ENCODE measurements at regions of chr5 and their contacts with region 1.

Region 1: GRCh38 chr5:172969921-172970320 is 10.7 kb downstream of the RPL26L1 start:
- DNase-seq: no peak
- ATAC-seq: no peak
- H3K4me3 Mint-ChIP-seq: no peak overlapping the region
- H3K27ac Mint-ChIP-seq: no peak overlapping the region
- H3K4me1 Mint-ChIP-seq: no peaks in the 10 kb centered on the region
- H3K27me3 Mint-ChIP-seq: no peaks in the 10 kb centered on the region

Region 2: DNA sequence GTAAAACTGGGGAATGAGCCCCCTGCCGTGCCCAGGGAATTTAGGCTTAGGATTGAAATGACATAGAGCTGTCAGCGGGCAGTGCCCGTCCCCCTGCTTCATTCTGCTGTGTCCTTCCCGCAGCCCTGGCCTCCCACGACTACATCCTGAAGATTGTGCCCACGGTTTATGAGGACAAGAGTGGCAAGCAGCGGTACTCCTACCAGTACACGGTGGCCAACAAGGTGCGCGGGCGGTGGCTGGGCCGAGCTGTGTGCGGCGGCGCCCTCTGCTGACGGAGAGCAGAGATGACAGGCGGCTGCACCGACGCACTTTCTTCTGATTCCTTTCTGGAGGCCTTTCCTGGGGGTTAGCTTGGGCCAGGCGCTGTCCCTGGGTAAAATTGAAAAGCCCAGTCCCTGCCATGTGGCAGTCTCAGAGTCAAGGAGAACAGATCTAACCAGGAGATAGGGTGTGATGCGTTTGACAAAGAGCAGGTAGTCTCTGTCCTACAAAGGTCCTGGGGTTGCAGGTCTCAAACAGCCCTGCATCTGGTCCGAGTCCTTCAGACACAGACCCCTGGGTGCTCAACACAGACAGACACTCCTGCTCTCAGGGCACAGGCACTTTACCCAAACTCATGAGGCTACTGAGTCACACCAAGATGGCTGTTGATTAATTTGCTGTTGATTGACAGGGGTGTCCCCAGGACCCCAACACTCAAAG is 37.5 kb before region 1 on chr5:
- CTCF ChIA-PET with region 1: no interaction called
- DNase-seq: peak; percentile 77
- ATAC-seq: peak; percentile 90
- H3K4me3 Mint-ChIP-seq: no peak overlapping the region
- H3K27ac Mint-ChIP-seq: no peak overlapping the region
- H3K4me1 Mint-ChIP-seq: peaks cover 2% of the 10 kb centered on the region
- H3K27me3 Mint-ChIP-seq: no peaks in the 10 kb centered on the region

Region 3: DNA sequence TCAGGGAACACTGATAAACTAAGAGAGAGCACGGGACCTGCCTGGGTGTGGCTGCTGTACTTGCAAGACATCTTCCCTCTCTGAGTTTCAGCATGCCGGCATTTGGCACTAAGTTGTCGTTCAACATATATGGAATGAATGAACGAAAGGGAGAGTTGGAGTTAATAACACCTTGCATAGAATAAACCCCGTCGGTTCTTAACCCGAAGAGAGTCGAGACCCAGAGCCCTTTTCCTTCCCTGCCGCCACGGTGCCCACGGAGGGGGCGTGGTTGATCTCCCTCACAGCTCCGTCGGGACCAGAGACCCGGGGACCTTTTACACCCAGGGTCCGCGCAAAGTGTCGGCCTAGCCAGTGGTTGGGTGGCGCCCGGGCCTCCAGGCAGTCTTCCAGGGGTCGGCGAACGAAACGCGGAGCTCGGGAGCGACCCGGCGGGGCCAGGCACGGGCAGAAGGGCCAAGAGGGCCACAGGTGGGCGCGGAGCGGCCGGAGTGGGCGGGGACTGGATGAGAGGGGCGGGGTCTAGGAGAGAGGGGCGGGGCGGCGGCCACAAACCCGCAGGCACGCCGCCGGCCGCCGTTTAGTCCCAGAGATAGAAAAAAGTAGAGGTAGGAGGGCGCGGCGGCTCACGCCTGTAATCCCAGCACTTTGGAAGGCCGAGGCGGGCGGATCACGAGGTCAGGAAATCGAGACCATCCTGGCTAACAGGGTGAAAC is 11.4 kb before region 1 on chr5:
- CTCF ChIA-PET with region 1: interaction called, 10 read pairs
- DNase-seq: peak; percentile 71
- ATAC-seq: peak; percentile 77
- H3K4me3 Mint-ChIP-seq: peak overlapping the region; percentile 92
- H3K27ac Mint-ChIP-seq: peak overlapping the region; percentile 95
- H3K4me1 Mint-ChIP-seq: peaks cover 22% of the 10 kb centered on the region
- H3K27me3 Mint-ChIP-seq: peaks cover 3% of the 10 kb centered on the region

Region 4: GRCh38 chr5:173395257-173395932 is 425.5 kb after region 1 on chr5:
- CTCF ChIA-PET with region 1: no interaction called
- DNase-seq: no peak
- ATAC-seq: no peak
- H3K4me3 Mint-ChIP-seq: no peak overlapping the region
- H3K27ac Mint-ChIP-seq: no peak overlapping the region
- H3K4me1 Mint-ChIP-seq: no peaks in the 10 kb centered on the region
- H3K27me3 Mint-ChIP-seq: no peaks in the 10 kb centered on the region